CD4-positive, alpha-beta T cell (primary cell): ENCODE measurements at regions of chr10 and their contacts with region 1.

Region 1: GRCh38 chr10:102064868-102065560 is at the start of gene HPS6:
- DNase-seq: peak; percentile 70 to 95 (median 88)
- ATAC-seq: peak; percentile 96
- H3K4me3 ChIP-seq: peak within 1 kb of the TSS; percentile 60
- H3K4me3 Mint-ChIP-seq: peak within 1 kb of the TSS; percentile 92
- H3K27ac ChIP-seq: peak within 1 kb of the TSS; percentile 77 to 82
- H3K27ac Mint-ChIP-seq: peak within 1 kb of the TSS; percentile 89
- H3K4me1 ChIP-seq: peaks cover 39% of the 10 kb centered on the region
- H3K4me1 Mint-ChIP-seq: peaks cover 23% of the 10 kb centered on the region
- H3K27me3 ChIP-seq: no peaks in the 10 kb centered on the region
- H3K27me3 Mint-ChIP-seq: no peaks in the 10 kb centered on the region
- CTCF ChIP-seq: no peak
- total RNA-seq, gene HPS6: 12.8 to 15.0 TPM

Region 2: GRCh38 chr10:102114861-102115618 is 50.0 kb after region 1 on chr10:
- CTCF ChIA-PET with region 1: no interaction called
- POLR2A ChIA-PET with region 1: interaction called, 3 read pairs
- intact Hi-C with region 1: loop called (anchors 2 to 5 kb)
- DNase-seq: peak; percentile 65 to 90 (median 84)
- ATAC-seq: peak; percentile 60
- H3K4me3 ChIP-seq: peak overlapping the region; percentile 58
- H3K4me3 Mint-ChIP-seq: peak overlapping the region; percentile 89
- H3K27ac ChIP-seq: peak overlapping the region; percentile 76 to 96
- H3K27ac Mint-ChIP-seq: peak overlapping the region; percentile 89
- H3K4me1 ChIP-seq: peaks cover 77% of the 10 kb centered on the region
- H3K4me1 Mint-ChIP-seq: peaks cover 73% of the 10 kb centered on the region
- H3K27me3 ChIP-seq: no peaks in the 10 kb centered on the region
- H3K27me3 Mint-ChIP-seq: no peaks in the 10 kb centered on the region
- CTCF ChIP-seq: no peak